T-cell (primary cell): ENCODE measurements at regions of chr13 and their contacts with region 1.

Region 1: GRCh38 chr13:88958821-88959220 is 1287.7 kb downstream of the SLITRK5 start:
- DNase-seq: no peak
- ATAC-seq: no peak
- H3K4me3 ChIP-seq: no peak overlapping the region
- H3K4me3 Mint-ChIP-seq: no peak overlapping the region
- H3K27ac ChIP-seq: no peak overlapping the region
- H3K27ac Mint-ChIP-seq: no peak overlapping the region
- H3K4me1 ChIP-seq: no peaks in the 10 kb centered on the region
- H3K4me1 Mint-ChIP-seq: no peaks in the 10 kb centered on the region
- H3K27me3 ChIP-seq: no peaks in the 10 kb centered on the region
- H3K27me3 Mint-ChIP-seq: no peaks in the 10 kb centered on the region

Region 2: GRCh38 chr13:89310943-89311672 is 352.3 kb after region 1 on chr13:
- CTCF ChIA-PET with region 1: no interaction called
- POLR2A ChIA-PET with region 1: interaction called in 1 of 2 experiments, 13 read pairs
- DNase-seq: no peak
- ATAC-seq: no peak
- H3K4me3 ChIP-seq: no peak overlapping the region
- H3K4me3 Mint-ChIP-seq: no peak overlapping the region
- H3K27ac ChIP-seq: no peak overlapping the region
- H3K27ac Mint-ChIP-seq: no peak overlapping the region
- H3K4me1 ChIP-seq: no peaks in the 10 kb centered on the region
- H3K4me1 Mint-ChIP-seq: no peaks in the 10 kb centered on the region
- H3K27me3 ChIP-seq: no peaks in the 10 kb centered on the region
- H3K27me3 Mint-ChIP-seq: no peaks in the 10 kb centered on the region